PC-9 (cell line): ENCODE measurements at regions of chr11 and their contacts with region 1.

Region 1: DNA sequence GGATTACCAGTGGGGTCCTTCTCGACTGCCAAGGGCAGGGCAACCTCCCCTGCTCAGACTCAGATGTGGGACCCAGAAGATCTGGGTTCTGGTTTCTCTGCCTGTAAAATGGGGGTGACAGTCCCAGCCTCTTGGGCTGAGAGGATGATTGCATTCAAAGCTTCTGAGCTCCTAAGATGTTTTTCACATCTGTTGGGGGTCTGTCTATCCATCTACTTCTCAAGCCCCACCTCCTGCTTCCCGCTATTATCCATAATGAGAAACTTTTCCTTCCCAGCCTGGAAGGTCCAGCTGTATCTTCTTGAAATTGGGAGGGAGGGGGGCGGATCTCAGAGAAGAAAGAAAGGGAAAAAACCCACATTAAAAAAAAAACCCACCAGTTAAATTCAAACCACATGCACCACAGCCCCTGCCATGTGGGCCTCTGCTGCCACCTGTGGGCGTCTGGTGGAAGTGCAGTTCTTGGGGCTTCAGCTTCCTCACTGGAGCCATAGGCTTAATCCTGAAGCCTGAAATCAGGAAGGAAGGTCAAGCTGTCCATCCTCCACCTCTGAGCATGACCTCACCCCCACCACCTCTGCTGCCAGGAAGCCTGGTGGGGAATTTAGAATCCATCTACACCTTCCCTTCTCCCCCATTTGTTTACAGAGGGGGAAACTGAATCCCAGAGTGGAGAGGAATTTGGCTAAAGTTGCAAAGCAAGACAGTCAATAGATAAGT is 27.3 kb downstream of the ARHGEF17 start:
- DNase-seq: peak; percentile 67 to 90
- H3K4me3 ChIP-seq: no peak overlapping the region
- H3K27ac ChIP-seq: no peak overlapping the region
- H3K4me1 ChIP-seq: peaks cover 20% of the 10 kb centered on the region
- H3K27me3 ChIP-seq: no peaks in the 10 kb centered on the region
- CTCF ChIP-seq: peak; percentile 99

Region 2: DNA sequence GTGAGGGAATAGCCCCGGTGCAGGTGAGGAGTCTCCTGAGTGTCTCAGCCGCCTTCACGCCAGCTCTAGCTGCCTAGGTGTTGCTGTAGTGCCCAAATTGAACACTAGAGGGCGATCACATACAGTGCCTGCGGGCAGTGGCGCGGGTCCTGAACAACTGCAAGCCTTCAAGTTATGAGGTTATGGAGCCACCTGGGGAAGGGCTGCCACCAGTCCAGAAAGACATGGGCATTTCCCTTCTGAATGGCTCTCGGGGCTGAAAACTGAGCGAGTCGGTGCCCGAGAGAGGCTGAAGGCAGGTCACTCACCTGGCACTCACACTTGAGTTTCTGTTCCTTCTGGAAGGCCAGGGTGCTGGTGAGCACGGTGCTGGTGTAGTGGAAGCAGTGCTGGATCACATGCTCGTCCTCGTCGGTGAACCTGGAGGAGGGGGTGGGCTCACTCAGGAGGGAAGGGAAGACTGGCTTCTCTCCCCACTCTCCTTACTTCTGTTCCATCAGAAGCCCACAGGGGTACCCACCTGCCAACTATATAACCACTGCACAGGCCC is 749.5 kb before region 1 on chr11:
- CTCF ChIA-PET with region 1: no interaction called
- POLR2A ChIA-PET with region 1: no interaction called
- intact Hi-C with region 1: loop called (anchors 5 kb)
- DNase-seq: peak in 1 of 2 experiments; percentile 66
- H3K4me3 ChIP-seq: no peak overlapping the region
- H3K27ac ChIP-seq: no peak overlapping the region
- H3K4me1 ChIP-seq: no peaks in the 10 kb centered on the region
- H3K27me3 ChIP-seq: no peaks in the 10 kb centered on the region
- CTCF ChIP-seq: peak; percentile 97

Region 3: GRCh38 chr11:72831513-72832300 is 503.7 kb before region 1 on chr11:
- CTCF ChIA-PET with region 1: no interaction called
- POLR2A ChIA-PET with region 1: no interaction called
- intact Hi-C with region 1: loop called (anchors 1 kb)
- DNase-seq: peak; percentile 61 to 85
- H3K4me3 ChIP-seq: no peak overlapping the region
- H3K27ac ChIP-seq: no peak overlapping the region
- H3K4me1 ChIP-seq: 0 out of 2 replicates have a peak, but pooled peaks cover 4% of the 10 kb centered on the region
- H3K27me3 ChIP-seq: no peaks in the 10 kb centered on the region
- CTCF ChIP-seq: peak; percentile 97

Region 4: DNA sequence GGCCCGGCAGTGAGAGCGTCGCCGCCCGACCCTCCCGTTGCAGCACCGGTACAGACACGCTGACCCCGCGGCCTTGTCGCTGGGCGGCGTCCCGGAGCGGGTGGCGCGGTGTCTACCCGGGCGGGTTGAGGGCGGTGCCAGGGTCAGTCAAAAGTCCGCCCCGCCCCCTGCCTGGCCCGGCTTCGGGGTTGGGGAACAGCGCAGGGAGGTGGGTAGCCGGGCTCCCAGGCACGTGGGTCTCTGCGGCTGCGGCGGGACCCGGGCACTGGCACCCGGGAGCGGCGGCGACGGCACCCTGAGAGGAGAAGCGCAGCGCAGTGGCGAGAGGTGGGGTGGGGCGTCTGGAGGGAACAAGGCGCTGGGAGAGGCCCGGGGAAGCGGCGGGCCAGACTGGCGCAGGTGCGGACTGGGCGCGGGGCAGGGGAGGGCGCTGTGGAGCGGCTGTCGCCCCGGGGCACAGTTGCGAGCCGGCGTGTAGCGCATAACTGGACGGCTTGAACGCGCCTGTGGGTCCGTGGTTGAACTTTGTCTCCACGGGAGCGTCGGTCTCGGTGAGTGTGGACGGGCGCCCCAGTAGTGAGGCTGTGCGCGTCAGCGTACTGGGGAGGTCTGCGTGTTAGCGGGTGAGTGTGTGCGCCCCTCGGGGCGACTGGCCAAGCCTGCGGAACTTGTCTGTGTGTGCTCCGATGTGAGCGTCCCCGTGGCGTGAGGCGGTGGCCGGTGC is 117.1 kb before region 1 on chr11 and contains the start of gene P2RY2:
- CTCF ChIA-PET with region 1: no interaction called
- POLR2A ChIA-PET with region 1: no interaction called
- intact Hi-C with region 1: no loop called
- DNase-seq: peak; percentile 73 to 93
- H3K4me3 ChIP-seq: peak within 1 kb of the TSS; percentile 69
- H3K27ac ChIP-seq: peak within 1 kb of the TSS; percentile 46
- H3K4me1 ChIP-seq: peaks cover 44% of the 10 kb centered on the region
- H3K27me3 ChIP-seq: no peaks in the 10 kb centered on the region
- CTCF ChIP-seq: peak; percentile 64
- total RNA-seq, gene P2RY2: 19.8 and 22.5 TPM in 2 replicates

Region 5: DNA sequence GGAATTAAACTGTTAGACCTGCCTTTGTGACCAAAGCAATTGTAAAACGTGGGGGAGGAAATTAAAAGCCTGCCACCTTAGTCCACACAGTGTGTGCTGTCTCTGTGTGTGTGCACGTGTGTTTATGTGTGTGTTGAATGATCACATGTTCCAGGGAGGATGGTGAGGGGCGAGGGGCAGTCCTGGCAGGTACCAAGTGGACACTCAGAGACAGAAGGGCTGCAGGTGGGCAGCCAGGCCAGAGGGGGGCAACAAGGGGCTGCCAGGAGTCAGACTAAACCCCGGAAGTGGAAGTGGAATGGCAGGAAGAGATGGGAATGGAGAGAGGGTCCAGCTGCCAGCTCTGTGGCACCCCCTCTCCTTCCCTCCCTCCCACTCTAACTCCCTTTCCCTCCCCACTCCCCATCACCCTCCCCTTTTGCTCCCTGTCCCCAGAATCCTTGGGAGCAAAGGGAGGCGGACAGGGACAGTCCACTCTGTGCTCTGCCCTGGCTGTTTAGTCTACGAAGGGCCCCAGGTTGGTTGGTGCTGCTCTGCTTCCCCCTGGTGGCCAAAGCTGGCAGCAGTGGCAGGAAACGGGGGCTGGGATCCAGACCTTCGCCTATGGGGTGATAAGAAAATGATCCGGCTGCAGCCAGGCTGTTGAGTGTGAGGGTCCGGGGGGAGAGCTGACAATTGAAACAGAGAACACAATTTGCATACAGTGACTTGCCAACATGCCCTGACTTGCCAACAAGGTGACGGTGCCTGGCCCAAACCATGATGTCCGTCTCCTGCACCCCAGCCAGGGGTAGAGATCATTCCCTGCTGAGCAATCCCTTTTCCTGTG is 92.9 kb before region 1 on chr11:
- CTCF ChIA-PET with region 1: interaction called, 10 read pairs
- POLR2A ChIA-PET with region 1: no interaction called
- intact Hi-C with region 1: loop called (anchors 2 kb)
- DNase-seq: peak in 1 of 2 experiments; percentile 79
- H3K4me3 ChIP-seq: no peak overlapping the region
- H3K27ac ChIP-seq: no peak overlapping the region
- H3K4me1 ChIP-seq: peaks cover 44% of the 10 kb centered on the region
- H3K27me3 ChIP-seq: no peaks in the 10 kb centered on the region
- CTCF ChIP-seq: peak; percentile 94

Region 6: GRCh38 chr11:73295231-73295995 is 40.0 kb before region 1 on chr11:
- CTCF ChIA-PET with region 1: interaction called, 18 read pairs
- POLR2A ChIA-PET with region 1: no interaction called
- intact Hi-C with region 1: loop called (anchors 1 kb)
- DNase-seq: peak; percentile 47 to 73
- H3K4me3 ChIP-seq: no peak overlapping the region
- H3K27ac ChIP-seq: peak overlapping the region; percentile 45; the same call in 1 of the 2 replicates
- H3K4me1 ChIP-seq: peaks cover 9% of the 10 kb centered on the region
- H3K27me3 ChIP-seq: no peaks in the 10 kb centered on the region
- CTCF ChIP-seq: peak; percentile 98

Region 7: GRCh38 chr11:73439002-73439843 is 103.9 kb after region 1 on chr11:
- CTCF ChIA-PET with region 1: no interaction called
- POLR2A ChIA-PET with region 1: no interaction called
- intact Hi-C with region 1: no loop called
- DNase-seq: no peak
- H3K4me3 ChIP-seq: no peak overlapping the region
- H3K27ac ChIP-seq: no peak overlapping the region
- H3K4me1 ChIP-seq: no peaks in the 10 kb centered on the region
- H3K27me3 ChIP-seq: no peaks in the 10 kb centered on the region
- CTCF ChIP-seq: no peak